Head of caudate nucleus (tissue), 42 donors: ENCODE measurements at regions of chr2 and their contacts with region 1.

Region 1: GRCh38 chr2:54704688-54705605 is 18.5 kb upstream of the EML6 start:
- DNase-seq: peak in 1 of 42 donors; percentile 37

Region 2: GRCh38 chr2:54115284-54116137 is 589.4 kb before region 1 on chr2 and contains the start of gene ACYP2:
- intact Hi-C with region 1: loop called (anchors 10 kb)
- DNase-seq: peak; percentile 85 to 98 (median 95)

Region 3: DNA sequence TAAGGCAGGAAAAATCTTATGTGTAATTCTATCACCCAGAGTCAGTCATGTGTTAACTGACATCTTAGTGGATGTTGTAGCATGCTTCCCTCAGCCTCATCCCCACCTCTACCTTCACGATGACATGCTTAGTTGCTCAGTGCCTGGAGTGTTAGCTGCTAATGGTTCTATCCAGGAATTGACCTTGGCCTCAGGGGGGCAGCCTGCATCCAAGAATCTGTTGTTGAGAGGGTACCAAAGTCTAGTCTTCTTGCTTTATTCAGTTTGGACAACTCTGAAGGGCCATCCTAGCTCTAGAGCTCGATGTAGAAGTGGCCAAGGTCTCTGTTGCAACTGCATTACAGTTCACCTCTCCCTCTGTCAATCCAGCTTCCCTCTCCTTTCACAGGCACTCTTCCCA is 528.4 kb before region 1 on chr2:
- intact Hi-C with region 1: loop called (anchors 2 kb)
- DNase-seq: peak; percentile 19 to 84 (median 64)